Ovary (tissue), 10 donors: ENCODE measurements at regions of chr3 and their contacts with region 1.

Region 1: GRCh38 chr3:51538459-51539290 is at the start of gene RAD54L2:
- DNase-seq: peak; percentile 66 to 89 (median 79)
- H3K4me3 ChIP-seq: peak within 1 kb of the TSS; percentile 99
- H3K27ac ChIP-seq: peak within 1 kb of the TSS; percentile 75 to 86
- H3K4me1 ChIP-seq: no peaks in the 10 kb centered on the region
- H3K27me3 ChIP-seq: no peaks in the 10 kb centered on the region
- CTCF ChIP-seq: peak in 2 of 3 donors; percentile 34 to 35
- EP300 ChIP-seq: no peak
- POLR2A ChIP-seq: peak; percentile 57
- total RNA-seq, gene RAD54L2: 11.7 to 32.5 (median 24.5) TPM

Region 2: GRCh38 chr3:50983887-50984286 is 554.8 kb before region 1 on chr3:
- intact Hi-C with region 1: no loop called
- DNase-seq: no peak
- H3K4me3 ChIP-seq: no peak overlapping the region
- H3K27ac ChIP-seq: no peak overlapping the region
- H3K4me1 ChIP-seq: no peaks in the 10 kb centered on the region
- H3K27me3 ChIP-seq: no peaks in the 10 kb centered on the region
- CTCF ChIP-seq: no peak
- EP300 ChIP-seq: no peak
- POLR2A ChIP-seq: no peak

Region 3: GRCh38 chr3:51622868-51623267 is 84.2 kb after region 1 on chr3:
- intact Hi-C with region 1: loop called in 1 of 4 experiments (anchors 10 kb)
- DNase-seq: peak in 2 of 5 donors; percentile 28 to 47
- H3K4me3 ChIP-seq: no peak overlapping the region
- H3K27ac ChIP-seq: no peak overlapping the region
- H3K4me1 ChIP-seq: peaks cover 14% of the 10 kb centered on the region
- H3K27me3 ChIP-seq: no peaks in the 10 kb centered on the region
- CTCF ChIP-seq: no peak
- EP300 ChIP-seq: no peak
- POLR2A ChIP-seq: no peak

Region 4: GRCh38 chr3:51657234-51657633 is 118.6 kb after region 1 on chr3:
- intact Hi-C with region 1: no loop called
- DNase-seq: no peak
- H3K4me3 ChIP-seq: no peak overlapping the region
- H3K27ac ChIP-seq: no peak overlapping the region
- H3K4me1 ChIP-seq: no peaks in the 10 kb centered on the region
- H3K27me3 ChIP-seq: no peaks in the 10 kb centered on the region
- CTCF ChIP-seq: no peak
- EP300 ChIP-seq: no peak
- POLR2A ChIP-seq: no peak

Region 5: DNA sequence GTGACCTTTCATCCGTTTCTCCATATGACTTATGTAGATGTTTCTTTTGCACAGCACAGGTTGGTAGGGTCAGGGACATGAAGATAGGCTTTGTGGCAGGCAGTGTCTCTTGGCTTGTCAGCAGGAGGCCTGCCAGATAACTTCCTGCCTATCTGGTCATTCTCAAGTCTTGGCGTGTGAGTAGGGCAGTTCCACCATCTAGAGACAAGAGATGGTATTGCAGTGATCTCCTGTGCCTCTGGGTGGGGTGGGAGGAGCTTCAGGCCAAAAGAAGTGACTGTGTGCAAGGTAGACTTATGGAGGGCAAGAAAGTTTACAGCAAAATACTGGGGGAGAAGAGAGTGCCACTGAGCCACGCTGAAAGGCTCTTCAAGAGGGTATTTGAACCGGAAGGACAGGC is 143.4 kb after region 1 on chr3:
- intact Hi-C with region 1: loop called in 1 of 4 experiments (anchors 10 kb)
- DNase-seq: peak; percentile 50 to 72 (median 64)
- H3K4me3 ChIP-seq: no peak overlapping the region
- H3K27ac ChIP-seq: no peak overlapping the region
- H3K4me1 ChIP-seq: no peaks in the 10 kb centered on the region
- H3K27me3 ChIP-seq: no peaks in the 10 kb centered on the region
- CTCF ChIP-seq: peak; percentile 24 to 86 (median 72)
- EP300 ChIP-seq: no peak
- POLR2A ChIP-seq: no peak

Region 6: GRCh38 chr3:51879937-51880336 is 341.3 kb after region 1 on chr3:
- intact Hi-C with region 1: no loop called
- DNase-seq: no peak
- H3K4me3 ChIP-seq: no peak overlapping the region
- H3K27ac ChIP-seq: no peak overlapping the region
- H3K4me1 ChIP-seq: no peaks in the 10 kb centered on the region
- H3K27me3 ChIP-seq: no peaks in the 10 kb centered on the region
- CTCF ChIP-seq: no peak
- EP300 ChIP-seq: no peak
- POLR2A ChIP-seq: no peak